Mucosa of descending colon (tissue), 3 donors: ENCODE measurements at regions of chr17 and their contacts with region 1.

Region 1: DNA sequence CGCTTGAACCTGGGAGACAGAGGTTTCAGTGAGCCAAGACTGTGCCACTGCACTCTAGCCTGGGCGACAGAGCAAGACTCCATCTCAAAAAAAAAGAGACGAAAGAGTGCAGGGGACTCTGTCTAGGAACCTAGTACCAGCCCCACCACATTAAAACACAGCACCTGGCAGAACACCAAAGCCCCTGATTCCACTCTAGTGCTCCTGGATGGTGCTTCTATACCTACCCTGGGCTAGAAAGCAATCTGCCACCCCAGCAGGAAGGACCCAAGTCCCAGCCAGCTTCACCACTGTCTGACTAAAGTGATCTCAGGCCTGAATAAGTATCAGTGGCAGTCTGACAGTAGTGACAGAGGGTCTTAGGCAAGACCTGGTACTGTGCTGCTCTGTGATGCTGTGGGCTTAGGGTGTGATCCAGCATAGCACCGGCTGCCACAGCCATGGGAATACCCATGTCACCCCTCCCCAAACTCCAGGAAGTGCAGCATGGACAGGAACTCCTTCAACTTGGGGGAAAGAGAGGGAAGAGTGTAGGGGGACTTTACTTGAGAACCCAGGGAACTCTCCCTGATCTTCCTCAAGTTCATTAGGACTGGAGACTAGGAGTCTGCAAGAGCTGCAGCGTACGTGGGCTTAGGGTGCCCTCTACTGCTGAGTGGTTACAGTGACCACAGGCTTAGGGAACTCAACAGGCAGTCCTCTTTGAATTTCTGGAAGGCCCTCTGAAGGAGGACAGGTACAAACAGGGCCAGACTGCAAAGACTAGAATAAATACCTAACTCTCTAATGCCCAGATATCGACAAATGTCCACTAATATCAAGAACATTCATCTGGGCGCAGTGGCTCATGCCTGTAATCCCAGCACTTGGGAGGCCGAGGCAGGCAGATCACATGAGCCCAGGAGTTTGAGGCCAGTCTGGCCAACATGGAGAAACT is 30.0 kb upstream of the RNF43 start:
- DNase-seq: peak; percentile 53 to 86 (median 83)
- ATAC-seq: peak; percentile 94
- H3K4me3 ChIP-seq: no peak overlapping the region
- H3K4me1 ChIP-seq: no peaks in the 10 kb centered on the region
- CTCF ChIP-seq: peak; percentile 48

Region 2: DNA sequence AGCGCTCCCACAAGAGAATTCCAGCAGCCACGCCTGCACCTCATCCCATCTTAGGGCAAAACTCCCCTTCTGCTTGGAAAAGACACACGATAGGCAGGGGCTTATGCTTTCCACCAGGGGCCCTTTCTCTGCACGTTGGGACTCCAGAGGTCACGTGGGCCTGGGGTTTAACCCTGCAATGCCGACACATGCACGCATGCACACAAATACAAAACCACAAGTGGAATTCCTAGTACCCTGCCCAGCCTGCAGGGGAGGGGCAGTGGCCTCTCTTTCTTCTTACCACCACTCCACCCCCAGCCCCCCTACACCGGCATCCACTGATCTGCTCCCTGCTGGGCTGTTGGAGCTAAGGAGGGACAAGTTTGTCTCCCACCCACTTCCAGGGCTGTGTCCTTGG is 685.4 kb before region 1 on chr17:
- intact Hi-C with region 1: no loop called
- DNase-seq: no peak
- ATAC-seq: no peak
- H3K4me3 ChIP-seq: no peak overlapping the region
- H3K4me1 ChIP-seq: no peaks in the 10 kb centered on the region
- CTCF ChIP-seq: no peak

Region 3: GRCh38 chr17:58317421-58318064 is 129.8 kb before region 1 on chr17:
- intact Hi-C with region 1: loop called in 1 of 2 experiments (anchors 1 kb)
- DNase-seq: peak in 2 of 3 donors; percentile 65 to 74
- ATAC-seq: peak; percentile 89
- H3K4me3 ChIP-seq: no peak overlapping the region
- H3K4me1 ChIP-seq: peaks cover 6% of the 10 kb centered on the region
- CTCF ChIP-seq: peak; percentile 57

Region 4: DNA sequence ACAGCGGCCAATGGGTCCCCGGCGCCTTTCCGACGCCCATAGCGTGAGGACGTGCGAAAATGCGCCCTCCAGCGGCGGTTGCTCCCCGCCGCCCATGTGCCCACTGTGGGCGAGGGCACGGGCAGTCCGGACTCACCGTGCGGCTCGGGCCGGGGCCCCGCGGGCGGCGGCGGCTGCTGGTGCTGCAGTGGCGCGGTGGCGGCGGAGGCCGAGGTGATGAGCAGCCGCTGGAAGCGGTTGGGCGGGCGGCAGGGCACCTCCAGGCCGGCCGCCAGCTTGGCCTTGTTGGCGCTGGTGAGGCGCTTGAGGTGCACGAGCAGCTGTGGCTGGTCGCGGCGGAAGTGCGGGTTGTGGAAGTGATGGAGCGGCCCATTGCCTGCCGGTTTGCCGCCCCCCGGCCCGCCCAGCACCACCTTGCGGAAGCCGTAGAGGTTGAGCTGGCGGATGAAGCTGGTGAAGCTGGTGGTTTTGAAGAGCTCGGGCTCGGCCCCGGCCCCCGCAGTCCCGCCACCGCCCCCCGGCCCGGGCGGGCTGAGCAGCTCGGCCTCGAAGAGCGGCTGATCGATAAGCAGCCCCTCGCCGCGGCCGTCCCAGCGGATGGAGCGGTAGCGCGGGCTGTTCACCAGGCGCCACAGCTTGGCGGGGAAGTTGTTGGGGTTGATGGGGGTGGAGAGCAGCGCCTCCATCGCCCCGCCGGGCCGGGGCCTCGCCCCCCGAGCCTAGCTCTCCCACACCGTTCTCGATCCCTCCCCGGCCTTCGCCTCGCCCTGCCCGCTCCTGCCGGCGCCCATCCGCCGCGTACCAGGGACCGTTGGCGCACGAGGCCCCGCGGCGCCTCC is 40.5 kb after region 1 on chr17 and contains the start of gene HSF5:
- intact Hi-C with region 1: no loop called
- DNase-seq: peak; percentile 14 to 78 (median 46)
- ATAC-seq: peak; percentile 83
- H3K4me3 ChIP-seq: no peak within 1 kb of the TSS
- H3K4me1 ChIP-seq: no peaks in the 10 kb centered on the region
- CTCF ChIP-seq: no peak
- total RNA-seq, gene HSF5: 0.07 to 0.09 TPM in 2 of 3 donors, not detected in the other

Region 5: DNA sequence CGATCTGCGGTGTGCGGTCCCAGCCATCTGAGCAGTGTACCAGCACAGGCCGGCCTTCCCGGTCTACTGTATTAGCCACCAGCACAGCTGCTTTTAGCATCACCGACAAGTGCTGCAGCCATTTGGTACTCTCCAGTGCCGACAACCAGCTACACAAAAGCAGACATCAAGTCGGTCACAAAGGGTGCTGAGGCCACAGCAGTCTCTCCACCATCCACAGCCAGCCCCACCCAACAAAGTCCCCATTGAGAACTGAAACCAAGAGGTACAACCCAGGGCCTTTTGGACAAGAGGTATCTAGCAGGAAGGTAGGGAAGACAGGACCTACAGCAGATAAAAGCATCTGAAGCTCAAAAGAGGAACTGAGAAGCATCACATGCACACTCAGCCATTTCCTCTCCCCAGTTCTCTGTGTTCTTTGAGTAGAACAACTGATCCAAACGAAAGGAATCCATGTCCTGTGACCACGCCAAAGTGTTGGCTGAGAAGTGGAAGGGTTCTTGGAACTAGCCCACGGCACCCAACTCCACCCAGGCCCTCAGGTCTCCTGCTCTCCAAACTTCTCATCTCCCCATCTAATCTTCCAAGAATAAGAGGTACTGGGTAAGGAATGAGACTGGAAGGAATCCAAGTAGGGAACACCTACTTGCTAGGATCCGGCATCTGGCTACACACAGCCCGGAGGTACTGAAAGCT is 57.7 kb after region 1 on chr17:
- intact Hi-C with region 1: no loop called
- DNase-seq: no peak
- ATAC-seq: peak; percentile 69
- H3K4me3 ChIP-seq: no peak overlapping the region
- H3K4me1 ChIP-seq: no peaks in the 10 kb centered on the region
- CTCF ChIP-seq: no peak

Region 6: DNA sequence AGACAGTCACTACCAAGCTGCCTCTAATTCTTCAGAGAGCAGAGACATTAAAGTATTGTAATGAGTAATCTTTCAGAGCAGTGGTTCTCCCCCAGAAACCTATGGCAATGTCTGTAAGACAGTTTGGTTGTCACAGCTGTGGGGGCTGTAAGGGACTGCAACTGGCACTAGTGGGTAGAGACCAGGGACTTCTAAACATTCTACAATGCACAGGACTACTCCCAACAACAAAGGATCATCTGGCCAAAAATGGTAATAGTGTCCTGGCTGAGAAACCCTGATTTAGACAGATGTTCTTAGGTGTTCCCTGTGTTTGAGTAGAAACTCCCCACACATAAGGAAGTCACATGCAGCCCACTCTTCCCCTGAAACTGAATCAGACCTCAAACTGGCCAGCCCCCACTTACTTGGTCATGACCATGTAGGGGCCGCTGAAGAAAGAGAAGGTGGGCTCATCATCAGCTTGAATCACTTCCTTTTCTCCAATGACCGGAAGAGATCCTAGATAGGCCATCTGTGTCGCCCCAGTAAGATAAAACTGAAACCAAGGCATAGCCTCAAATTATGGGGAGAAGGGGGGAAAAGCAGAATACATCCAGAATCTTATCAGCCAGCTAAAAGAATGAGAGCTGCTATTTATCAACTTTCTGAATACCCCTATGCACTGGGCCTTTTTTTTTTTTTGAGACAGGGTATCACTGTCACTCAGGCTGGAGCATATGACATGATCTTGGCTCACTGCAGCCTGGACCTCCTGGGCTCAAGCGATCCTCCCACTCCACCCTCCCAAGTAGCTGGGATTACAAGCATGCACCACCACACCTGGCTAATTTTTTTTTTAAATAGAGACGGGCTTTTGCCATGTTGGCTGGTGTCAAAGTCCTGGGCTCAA is 168.7 kb after region 1 on chr17:
- intact Hi-C with region 1: no loop called
- DNase-seq: no peak
- ATAC-seq: no peak
- H3K4me3 ChIP-seq: no peak overlapping the region
- H3K4me1 ChIP-seq: no peaks in the 10 kb centered on the region
- CTCF ChIP-seq: no peak